ENCODE measurements at regions of chr7 and their contacts with region 1.

Region 1: DNA sequence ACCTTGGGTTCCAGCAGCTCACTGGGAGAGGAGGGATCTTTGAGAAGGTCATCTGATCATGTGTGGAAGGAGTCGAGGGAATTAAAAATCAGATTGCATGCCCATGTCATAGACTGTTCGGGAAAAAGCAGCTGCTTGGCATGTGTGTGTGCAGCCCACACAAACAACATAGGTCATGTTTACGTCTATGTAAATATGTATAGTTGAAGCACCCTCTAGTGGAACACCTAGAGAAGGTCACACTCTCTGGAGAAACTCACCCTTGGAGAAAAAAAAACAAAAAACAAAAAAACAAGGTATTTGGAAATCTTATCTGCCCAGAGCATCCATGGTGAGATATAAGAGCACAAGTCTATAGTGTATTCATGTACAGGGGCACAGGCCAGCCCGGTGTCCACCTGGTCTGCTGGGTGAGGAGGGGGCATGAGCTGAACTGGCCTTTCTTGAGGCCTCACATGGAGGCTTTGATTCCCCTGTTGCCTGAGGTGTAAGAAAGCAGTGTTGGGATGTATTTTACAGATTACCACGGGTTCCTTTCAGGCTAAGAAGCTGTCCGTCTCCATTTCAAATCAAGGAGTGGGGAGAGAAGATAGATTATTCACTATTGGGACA is 98.0 kb downstream of the NPY start:
- DNase-seq: no peak
- H3K4me3 Mint-ChIP-seq: no peak overlapping the region
- H3K27ac Mint-ChIP-seq: no peak overlapping the region
- H3K4me1 Mint-ChIP-seq: no peaks in the 10 kb centered on the region
- H3K27me3 Mint-ChIP-seq: peaks cover 7% of the 10 kb centered on the region

Region 2: GRCh38 chr7:23546897-23547572 is 835.0 kb before region 1 on chr7:
- intact Hi-C with region 1: no loop called
- DNase-seq: peak; percentile 93
- H3K4me3 Mint-ChIP-seq: no peak overlapping the region
- H3K27ac Mint-ChIP-seq: no peak overlapping the region
- H3K4me1 Mint-ChIP-seq: peaks cover 7% of the 10 kb centered on the region
- H3K27me3 Mint-ChIP-seq: peaks cover 5% of the 10 kb centered on the region

Region 3: GRCh38 chr7:24172856-24173255 is 209.1 kb before region 1 on chr7:
- intact Hi-C with region 1: no loop called
- DNase-seq: peak; percentile 47
- H3K4me3 Mint-ChIP-seq: no peak overlapping the region
- H3K27ac Mint-ChIP-seq: no peak overlapping the region
- H3K4me1 Mint-ChIP-seq: no peaks in the 10 kb centered on the region
- H3K27me3 Mint-ChIP-seq: peaks cover under 1% of the 10 kb centered on the region

Region 4: GRCh38 chr7:24290004-24290641 is 91.9 kb before region 1 on chr7:
- intact Hi-C with region 1: loop called (anchors 1 kb)
- DNase-seq: peak; percentile 82
- H3K4me3 Mint-ChIP-seq: no peak overlapping the region
- H3K27ac Mint-ChIP-seq: no peak overlapping the region
- H3K4me1 Mint-ChIP-seq: peaks cover 6% of the 10 kb centered on the region
- H3K27me3 Mint-ChIP-seq: peaks cover 42% of the 10 kb centered on the region

Region 5: DNA sequence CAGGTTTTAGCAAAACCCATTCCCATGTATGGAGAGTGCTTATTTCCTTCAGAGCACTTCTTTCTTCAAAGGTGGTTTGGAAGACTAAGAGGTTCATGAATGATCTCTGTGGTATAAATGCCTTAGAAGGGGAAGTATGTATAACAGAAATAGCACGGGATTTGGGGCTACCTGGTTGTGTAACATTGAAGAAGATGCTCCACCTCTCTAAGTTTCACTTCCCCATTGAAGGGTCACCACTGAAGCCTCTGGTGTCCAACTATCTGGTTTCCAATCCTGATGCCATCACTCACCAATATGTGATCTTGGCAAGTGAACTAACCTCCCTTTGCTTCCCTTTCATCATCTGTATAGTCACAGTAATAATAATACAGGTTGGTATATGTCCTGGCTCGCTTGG is 705.9 kb after region 1 on chr7:
- intact Hi-C with region 1: no loop called
- DNase-seq: no peak
- H3K4me3 Mint-ChIP-seq: no peak overlapping the region
- H3K27ac Mint-ChIP-seq: no peak overlapping the region
- H3K4me1 Mint-ChIP-seq: no peaks in the 10 kb centered on the region
- H3K27me3 Mint-ChIP-seq: peaks cover 16% of the 10 kb centered on the region

Measured in activated CD4-positive, alpha-beta T cell treated with anti-CD3 and anti-CD28 coated beads, Interleukin-2, amount 10 ng/mL, durations not matched to agents 24 days and 14 days (primary cell).